ENCODE measurements at regions of chr12 and their contacts with region 1.

Region 1: DNA sequence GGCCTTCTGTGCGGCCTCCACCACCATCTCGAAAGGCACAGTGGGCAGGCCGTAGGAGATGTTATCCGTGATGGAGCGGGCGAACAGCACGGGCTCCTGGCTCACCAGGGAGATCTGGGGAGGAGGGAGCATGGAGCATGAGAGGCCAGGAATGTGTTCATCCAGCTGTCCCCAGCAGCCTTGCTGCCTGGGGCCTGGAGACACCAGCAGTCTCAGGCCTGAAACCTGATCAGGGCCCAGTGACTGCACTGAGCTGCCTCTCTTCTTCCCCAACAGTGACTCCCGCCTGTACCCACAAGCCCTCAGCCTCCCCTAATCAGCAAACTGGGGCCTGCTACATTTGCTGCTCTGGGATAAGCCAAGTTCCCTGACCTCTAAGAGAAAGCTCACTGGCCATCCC is 30.9 kb downstream of the ABCB9 start:
- DNase-seq: no peak
- H3K4me3 ChIP-seq: no peak overlapping the region
- H3K27me3 ChIP-seq: no peaks in the 10 kb centered on the region
- CTCF ChIP-seq: no peak

Region 2: GRCh38 chr12:122871851-122872780 is 63.2 kb before region 1 on chr12:
- CTCF ChIA-PET with region 1: no interaction called
- POLR2A ChIA-PET with region 1: interaction called, 11 read pairs
- DNase-seq: no peak
- H3K4me3 ChIP-seq: peak overlapping the region; percentile 30
- H3K27me3 ChIP-seq: no peaks in the 10 kb centered on the region
- CTCF ChIP-seq: no peak

Region 3: DNA sequence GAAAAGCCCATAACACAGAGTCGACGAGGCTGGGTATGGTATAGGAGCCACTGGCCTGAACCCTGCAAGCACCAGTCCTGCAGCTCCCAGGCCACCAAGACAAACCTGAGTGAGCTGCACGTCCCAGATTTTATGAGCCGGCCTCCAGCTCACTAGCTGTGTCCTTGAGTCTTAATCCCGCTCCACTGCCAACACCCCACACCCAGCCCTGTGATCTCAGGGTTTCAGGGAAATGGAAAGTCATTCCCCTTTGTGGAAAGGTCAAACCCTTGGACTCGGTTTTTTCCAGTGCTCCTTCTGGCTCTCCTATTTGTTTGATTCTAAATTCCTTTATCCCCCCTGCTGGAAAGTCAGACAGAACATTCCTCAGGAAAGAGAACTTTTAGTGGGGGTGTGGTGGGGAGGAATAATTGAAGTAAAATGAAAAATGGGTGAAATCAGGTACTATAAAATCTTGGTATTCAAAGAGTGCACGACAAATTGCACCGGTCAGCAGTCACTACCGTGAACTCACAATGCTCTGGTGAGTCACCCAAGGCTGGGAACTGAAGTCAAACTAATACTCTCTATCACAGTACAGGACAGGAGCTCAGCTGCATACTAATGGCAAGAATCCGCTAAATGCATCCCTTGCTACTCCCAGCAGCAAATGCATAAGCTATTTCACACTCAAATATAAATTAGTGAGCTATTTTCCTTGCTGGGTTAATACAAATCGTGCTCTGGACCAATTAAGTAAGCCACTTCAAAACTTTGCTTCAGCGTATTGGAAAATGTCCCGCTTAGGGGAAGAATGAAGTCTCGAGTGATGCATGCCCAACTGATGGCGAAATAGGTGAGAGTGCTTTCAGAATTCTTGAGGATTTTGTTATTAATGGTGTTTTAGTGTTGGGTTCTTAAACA is 206.5 kb after region 1 on chr12:
- CTCF ChIA-PET with region 1: no interaction called
- POLR2A ChIA-PET with region 1: no interaction called
- DNase-seq: peak; percentile 30
- H3K4me3 ChIP-seq: no peak overlapping the region
- H3K27me3 ChIP-seq: no peaks in the 10 kb centered on the region
- CTCF ChIP-seq: no peak

Measured in BJ (cell line).